ENCODE measurements at regions of chr11 and their contacts with region 1.

Region 1: DNA sequence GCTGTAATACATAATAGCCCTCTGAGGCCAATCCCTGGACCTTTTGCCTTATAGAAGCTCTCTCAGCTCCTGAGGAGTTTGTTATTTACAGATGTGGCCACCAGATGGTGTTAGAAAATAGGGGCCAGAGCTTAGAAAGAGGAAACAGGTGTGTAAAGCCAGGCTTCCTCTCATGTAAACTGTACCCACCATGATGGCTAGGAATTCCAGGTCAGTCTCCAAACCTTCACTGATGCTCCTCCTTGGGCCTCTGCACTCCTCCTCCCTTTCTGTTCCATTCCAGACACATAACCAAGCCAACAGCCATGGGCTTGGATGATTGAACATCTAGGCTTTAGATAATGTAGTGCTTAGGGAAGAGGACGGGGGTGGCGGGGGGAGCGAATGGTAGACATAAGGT is 39.7 kb downstream of the USP35 start:
- DNase-seq: peak; percentile 21
- H3K4me3 Mint-ChIP-seq: no peak overlapping the region
- H3K27ac Mint-ChIP-seq: no peak overlapping the region
- H3K4me1 Mint-ChIP-seq: peaks cover 75% of the 10 kb centered on the region
- H3K27me3 Mint-ChIP-seq: no peaks in the 10 kb centered on the region

Region 2: DNA sequence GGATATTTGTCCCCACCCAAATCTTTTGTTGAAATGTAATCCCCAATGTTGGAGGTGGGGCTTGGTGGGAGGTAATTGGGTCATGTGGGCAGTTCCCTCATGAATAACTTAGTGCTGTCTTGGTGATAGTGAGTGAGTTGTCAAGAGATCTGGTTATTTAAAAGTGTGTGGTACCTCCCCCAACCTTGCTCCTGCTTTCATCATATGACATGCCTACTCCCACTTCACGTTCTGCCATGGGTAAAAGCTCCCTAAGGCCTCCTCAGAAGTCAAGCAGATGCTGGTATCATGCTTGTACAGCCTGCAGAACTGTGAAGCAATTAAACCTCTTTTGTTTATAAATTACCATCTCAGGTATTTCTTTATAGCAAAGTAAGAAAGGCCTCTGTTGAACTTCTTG is 377.0 kb before region 1 on chr11:
- intact Hi-C with region 1: no loop called
- DNase-seq: no peak
- H3K4me3 Mint-ChIP-seq: no peak overlapping the region
- H3K27ac Mint-ChIP-seq: no peak overlapping the region
- H3K4me1 Mint-ChIP-seq: no peaks in the 10 kb centered on the region
- H3K27me3 Mint-ChIP-seq: no peaks in the 10 kb centered on the region

Region 3: GRCh38 chr11:78202733-78203167 is 25.7 kb before region 1 on chr11:
- intact Hi-C with region 1: loop called (anchors 2 kb)
- DNase-seq: peak; percentile 59
- H3K4me3 Mint-ChIP-seq: peak overlapping the region; percentile 80
- H3K27ac Mint-ChIP-seq: peak overlapping the region; percentile 96
- H3K4me1 Mint-ChIP-seq: peaks cover 39% of the 10 kb centered on the region
- H3K27me3 Mint-ChIP-seq: no peaks in the 10 kb centered on the region